Activated CD8-positive, alpha-beta T cell treated with anti-CD3 and anti-CD28 coated beads, Interleukin-2, amount 10 ng/mL, durations not matched to agents 7 days and 5 days (primary cell): ENCODE measurements at regions of chr12 and their contacts with region 1.

Region 1: DNA sequence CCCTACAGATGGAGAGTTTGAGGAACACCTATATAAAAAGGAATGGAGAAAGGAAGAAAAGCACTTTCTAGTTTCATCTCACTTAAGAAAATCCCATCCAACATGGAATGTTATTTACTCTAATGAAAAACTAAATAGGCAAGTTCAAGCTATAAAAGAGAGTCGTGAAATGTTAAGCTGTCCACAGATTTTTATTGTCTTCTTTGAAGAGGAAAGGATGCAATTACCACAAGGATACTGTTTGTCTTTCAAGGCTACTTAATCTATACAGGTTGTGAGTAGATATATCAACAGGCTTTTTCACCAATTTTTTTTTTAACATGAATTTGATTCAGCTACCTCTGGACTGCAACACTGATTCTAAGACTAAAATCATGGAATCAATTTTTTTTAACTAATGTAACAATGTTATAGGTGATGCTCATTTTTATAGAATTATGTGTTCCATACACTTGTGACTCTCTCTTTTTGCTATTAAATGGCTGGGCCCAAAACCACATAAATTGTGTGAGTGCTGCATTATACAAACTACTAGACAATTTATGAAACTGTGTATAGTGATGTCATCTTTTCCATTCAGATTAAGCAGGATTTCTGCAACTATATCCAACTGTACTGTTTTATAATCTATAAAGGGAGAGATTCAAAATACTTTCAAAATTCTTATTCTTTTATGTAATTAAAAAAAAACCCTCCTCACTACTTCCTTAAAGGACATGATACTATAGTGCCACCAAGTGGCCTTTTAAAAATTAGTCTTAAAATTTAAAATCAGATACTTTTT is 26.8 kb upstream of the BMAL2 start:
- DNase-seq: no peak
- ATAC-seq: peak; percentile 53
- H3K4me3 Mint-ChIP-seq: no peak overlapping the region
- H3K27ac Mint-ChIP-seq: no peak overlapping the region
- H3K4me1 Mint-ChIP-seq: peaks cover 15% of the 10 kb centered on the region
- H3K27me3 Mint-ChIP-seq: no peaks in the 10 kb centered on the region

Region 2: GRCh38 chr12:26953447-26953846 is 352.4 kb before region 1 on chr12:
- CTCF ChIA-PET with region 1: no interaction called
- POLR2A ChIA-PET with region 1: no interaction called
- DNase-seq: no peak
- ATAC-seq: no peak
- H3K4me3 Mint-ChIP-seq: no peak overlapping the region
- H3K27ac Mint-ChIP-seq: no peak overlapping the region
- H3K4me1 Mint-ChIP-seq: peaks cover 29% of the 10 kb centered on the region
- H3K27me3 Mint-ChIP-seq: no peaks in the 10 kb centered on the region

Region 3: GRCh38 chr12:27014085-27014858 is 291.6 kb before region 1 on chr12 and contains the start of gene TM7SF3:
- CTCF ChIA-PET with region 1: interaction called, 193 read pairs
- POLR2A ChIA-PET with region 1: interaction called, 6 read pairs
- DNase-seq: peak; percentile 97
- ATAC-seq: peak; percentile 88
- H3K4me3 Mint-ChIP-seq: peak within 1 kb of the TSS; percentile 93
- H3K27ac Mint-ChIP-seq: peak within 1 kb of the TSS; percentile 90
- H3K4me1 Mint-ChIP-seq: peaks cover 58% of the 10 kb centered on the region
- H3K27me3 Mint-ChIP-seq: no peaks in the 10 kb centered on the region
- total RNA-seq, gene TM7SF3: 46.2 to 54.0 TPM

Region 4: GRCh38 chr12:27034607-27035293 is 271.1 kb before region 1 on chr12:
- CTCF ChIA-PET with region 1: interaction called, 32 read pairs
- POLR2A ChIA-PET with region 1: no interaction called
- DNase-seq: no peak
- ATAC-seq: no peak
- H3K4me3 Mint-ChIP-seq: no peak overlapping the region
- H3K27ac Mint-ChIP-seq: no peak overlapping the region
- H3K4me1 Mint-ChIP-seq: peaks cover 3% of the 10 kb centered on the region
- H3K27me3 Mint-ChIP-seq: no peaks in the 10 kb centered on the region

Region 5: DNA sequence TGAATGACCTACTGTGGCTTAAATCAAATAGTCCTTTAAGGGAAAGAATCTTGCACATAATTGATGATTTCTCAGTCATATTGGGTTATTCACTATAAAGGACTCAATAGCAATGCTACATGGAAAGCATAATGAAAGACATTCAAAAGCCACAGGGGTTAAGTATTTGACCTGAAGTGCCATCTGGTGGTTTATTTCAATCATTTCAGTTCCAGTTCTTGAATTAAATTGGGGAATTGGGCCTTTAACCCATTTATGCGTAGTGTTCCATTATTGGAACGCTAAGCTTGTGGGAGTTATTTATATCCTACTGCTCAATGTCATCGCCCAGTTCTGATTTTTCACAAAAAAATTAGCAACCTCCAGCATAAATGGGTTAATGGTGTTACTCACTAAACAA is 182.2 kb before region 1 on chr12:
- CTCF ChIA-PET with region 1: interaction called, 14 read pairs
- POLR2A ChIA-PET with region 1: no interaction called
- DNase-seq: no peak
- ATAC-seq: no peak
- H3K4me3 Mint-ChIP-seq: no peak overlapping the region
- H3K27ac Mint-ChIP-seq: no peak overlapping the region
- H3K4me1 Mint-ChIP-seq: peaks cover 2% of the 10 kb centered on the region
- H3K27me3 Mint-ChIP-seq: no peaks in the 10 kb centered on the region

Region 6: GRCh38 chr12:27243804-27244683 is 61.8 kb before region 1 on chr12 and contains the start of gene STK38L:
- CTCF ChIA-PET with region 1: interaction called, 20 read pairs
- POLR2A ChIA-PET with region 1: interaction called, 4 read pairs
- DNase-seq: peak; percentile 98
- ATAC-seq: peak; percentile 98
- H3K4me3 Mint-ChIP-seq: peak within 1 kb of the TSS; percentile 93
- H3K27ac Mint-ChIP-seq: peak within 1 kb of the TSS; percentile 95
- H3K4me1 Mint-ChIP-seq: peaks cover 41% of the 10 kb centered on the region
- H3K27me3 Mint-ChIP-seq: no peaks in the 10 kb centered on the region
- total RNA-seq, gene STK38L: 18.1 to 19.3 TPM

Region 7: DNA sequence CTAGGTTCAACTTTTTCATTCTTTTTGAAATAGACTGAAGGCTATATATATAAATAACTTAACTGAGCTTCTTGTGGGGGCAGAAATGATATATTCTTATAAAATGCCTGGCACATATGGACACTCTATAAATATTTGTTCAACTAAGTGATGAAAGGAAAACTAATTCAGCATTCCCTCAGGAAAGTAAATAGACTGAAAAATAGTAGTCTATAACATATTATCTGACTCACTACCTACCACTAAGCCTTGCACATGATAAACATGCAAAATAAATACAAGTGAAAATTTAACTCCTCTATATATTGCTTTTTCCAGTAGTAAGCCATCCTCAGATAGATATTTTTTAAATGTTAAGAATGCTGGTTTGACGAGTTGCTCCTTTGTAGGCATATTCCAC is 11.1 kb after region 1 on chr12:
- CTCF ChIA-PET with region 1: interaction called, 15 read pairs
- POLR2A ChIA-PET with region 1: no interaction called
- DNase-seq: no peak
- ATAC-seq: no peak
- H3K4me3 Mint-ChIP-seq: no peak overlapping the region
- H3K27ac Mint-ChIP-seq: no peak overlapping the region
- H3K4me1 Mint-ChIP-seq: no peaks in the 10 kb centered on the region
- H3K27me3 Mint-ChIP-seq: no peaks in the 10 kb centered on the region

Region 8: GRCh38 chr12:27332407-27333301 is 26.8 kb after region 1 on chr12 and contains the start of gene BMAL2:
- CTCF ChIA-PET with region 1: interaction called, 24 read pairs
- POLR2A ChIA-PET with region 1: no interaction called
- DNase-seq: peak; percentile 57
- ATAC-seq: peak; percentile 68
- H3K4me3 Mint-ChIP-seq: peak within 1 kb of the TSS; percentile 94
- H3K27ac Mint-ChIP-seq: peak within 1 kb of the TSS; percentile 89
- H3K4me1 Mint-ChIP-seq: peaks cover 35% of the 10 kb centered on the region
- H3K27me3 Mint-ChIP-seq: peaks cover 12% of the 10 kb centered on the region
- total RNA-seq, gene BMAL2: 17.9 to 18.3 TPM